K562 (cell line): ENCODE measurements at regions of chr20 and their contacts with region 1.

Region 1: GRCh38 chr20:49219089-49219923 is at the start of gene DDX27:
- DNase-seq: peak; percentile 94 to 99 (median 96)
- ATAC-seq: peak; percentile 93
- H3K4me3 ChIP-seq: peak within 1 kb of the TSS; percentile 77
- H3K27ac ChIP-seq: peak within 1 kb of the TSS; percentile 76
- H3K4me1 ChIP-seq: peaks cover 14 to 19% of the 10 kb centered on the region in 2 experiments; a peak in 4 of 5 replicates
- H3K27me3 ChIP-seq: no peaks in the 10 kb centered on the region
- CTCF ChIP-seq: peak in 1 of 3 experiments; percentile 9; a peak in 1 of 6 replicates
- EP300 ChIP-seq: no peak
- POLR2A ChIP-seq: peak; percentile 93
- RAD21 ChIP-seq: no peak
- polyA plus RNA-seq, gene DDX27: 17.9 to 45.2 TPM

Region 2: DNA sequence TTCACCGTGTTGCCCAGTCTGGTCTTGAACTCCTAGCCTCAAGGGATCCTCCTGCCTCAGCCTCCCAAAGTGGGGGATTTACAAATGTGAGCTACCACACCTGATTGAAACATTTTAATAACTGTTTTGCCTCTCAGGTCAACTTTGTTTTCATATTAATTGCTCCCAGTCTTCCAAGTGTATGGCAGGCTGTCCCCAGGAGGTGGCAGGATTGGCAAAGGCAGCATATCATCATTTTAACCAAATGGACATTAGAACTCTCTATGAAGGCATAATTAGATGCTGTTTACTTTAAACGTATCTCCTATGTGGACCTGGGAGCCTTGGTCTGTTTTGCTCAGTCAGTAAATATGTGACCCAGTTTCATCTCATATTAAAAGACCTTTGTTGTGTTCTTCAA is 232.4 kb before region 1 on chr20:
- CTCF ChIA-PET with region 1: no interaction called
- POLR2A ChIA-PET with region 1: no interaction called
- in situ Hi-C with region 1: no loop called
- intact Hi-C with region 1: loop called (anchors 2 kb)
- DNase-seq: peak in 2 of 4 experiments; percentile 17
- ATAC-seq: peak; percentile 60; the same call in 2 of the 3 replicates
- H3K4me3 ChIP-seq: no peak overlapping the region
- H3K27ac ChIP-seq: no peak overlapping the region
- H3K4me1 ChIP-seq: no peaks in the 10 kb centered on the region; a peak in 1 of 5 replicates
- H3K27me3 ChIP-seq: no peaks in the 10 kb centered on the region
- CTCF ChIP-seq: peak; percentile 25 to 50 (median 47); a peak in 5 of 6 replicates
- EP300 ChIP-seq: no peak
- POLR2A ChIP-seq: no peak
- RAD21 ChIP-seq: peak in 1 of 2 experiments; percentile 33; a peak in 1 of 4 replicates

Region 3: GRCh38 chr20:49132995-49133478 is 86.3 kb before region 1 on chr20:
- CTCF ChIA-PET with region 1: interaction called, 15 read pairs
- POLR2A ChIA-PET with region 1: interaction called, 4 read pairs
- in situ Hi-C with region 1: loop called (anchors 5 kb)
- intact Hi-C with region 1: loop called (anchors 1 kb)
- DNase-seq: peak; percentile 30 to 66 (median 38)
- ATAC-seq: peak; percentile 82
- H3K4me3 ChIP-seq: no peak overlapping the region
- H3K27ac ChIP-seq: no peak overlapping the region
- H3K4me1 ChIP-seq: peaks cover 3 to 6% of the 10 kb centered on the region in 2 experiments; a peak in 2 of 5 replicates
- H3K27me3 ChIP-seq: no peaks in the 10 kb centered on the region
- CTCF ChIP-seq: peak; percentile 52 to 70 (median 52); a peak in 5 of 6 replicates
- EP300 ChIP-seq: no peak
- POLR2A ChIP-seq: no peak
- RAD21 ChIP-seq: peak; percentile 52 to 76

Region 4: DNA sequence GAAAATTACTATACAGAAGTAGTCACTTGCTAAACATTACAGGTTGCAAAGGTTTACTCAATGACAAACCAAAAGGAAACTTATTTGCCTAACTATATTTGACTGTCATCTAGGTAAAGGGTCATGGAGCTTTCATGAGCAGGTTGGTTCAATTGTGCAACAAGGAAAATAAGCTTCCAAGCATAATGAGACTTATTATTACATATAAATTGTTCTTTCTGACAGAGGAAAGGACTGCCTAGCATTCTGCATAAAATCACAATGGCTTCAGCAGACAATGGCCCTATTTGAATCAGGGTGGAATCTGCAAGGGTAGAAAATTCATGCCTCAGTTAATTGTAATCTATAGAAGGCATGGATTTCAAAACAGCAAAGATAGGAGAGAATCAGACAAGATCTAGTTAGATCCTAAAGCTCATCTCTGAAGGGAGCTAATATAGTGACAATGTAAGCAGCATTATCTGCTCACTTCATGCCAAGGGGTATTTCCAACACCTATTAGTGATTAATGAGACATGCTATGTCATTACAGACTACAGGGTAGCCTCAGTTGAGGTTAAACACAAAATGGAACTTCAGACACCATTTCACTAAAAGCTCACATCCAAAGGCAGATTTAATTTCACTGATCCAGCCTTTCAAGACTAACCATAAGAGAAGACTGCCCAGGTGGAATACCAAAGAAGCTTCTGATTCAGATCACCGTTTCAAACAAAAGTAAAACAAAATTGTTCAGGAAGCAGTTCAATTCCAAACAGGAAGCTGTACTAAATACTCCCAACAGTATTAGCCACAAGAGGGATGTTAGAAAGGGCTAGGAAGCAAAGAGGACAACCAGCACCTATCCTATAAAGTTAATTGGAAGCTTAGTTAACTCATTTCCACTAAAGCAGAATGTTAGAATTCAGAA is 39.7 kb before region 1 on chr20:
- CTCF ChIA-PET with region 1: no interaction called
- POLR2A ChIA-PET with region 1: no interaction called
- in situ Hi-C with region 1: no loop called
- intact Hi-C with region 1: loop called (anchors 5 kb)
- DNase-seq: no peak
- ATAC-seq: no peak
- H3K4me3 ChIP-seq: no peak overlapping the region
- H3K27ac ChIP-seq: no peak overlapping the region; the same call in 2 of the 3 replicates
- H3K4me1 ChIP-seq: peaks cover 12 to 25% of the 10 kb centered on the region in 2 experiments; a peak in 3 of 5 replicates
- H3K27me3 ChIP-seq: no peaks in the 10 kb centered on the region
- CTCF ChIP-seq: no peak
- EP300 ChIP-seq: no peak
- POLR2A ChIP-seq: no peak
- RAD21 ChIP-seq: no peak

Region 5: DNA sequence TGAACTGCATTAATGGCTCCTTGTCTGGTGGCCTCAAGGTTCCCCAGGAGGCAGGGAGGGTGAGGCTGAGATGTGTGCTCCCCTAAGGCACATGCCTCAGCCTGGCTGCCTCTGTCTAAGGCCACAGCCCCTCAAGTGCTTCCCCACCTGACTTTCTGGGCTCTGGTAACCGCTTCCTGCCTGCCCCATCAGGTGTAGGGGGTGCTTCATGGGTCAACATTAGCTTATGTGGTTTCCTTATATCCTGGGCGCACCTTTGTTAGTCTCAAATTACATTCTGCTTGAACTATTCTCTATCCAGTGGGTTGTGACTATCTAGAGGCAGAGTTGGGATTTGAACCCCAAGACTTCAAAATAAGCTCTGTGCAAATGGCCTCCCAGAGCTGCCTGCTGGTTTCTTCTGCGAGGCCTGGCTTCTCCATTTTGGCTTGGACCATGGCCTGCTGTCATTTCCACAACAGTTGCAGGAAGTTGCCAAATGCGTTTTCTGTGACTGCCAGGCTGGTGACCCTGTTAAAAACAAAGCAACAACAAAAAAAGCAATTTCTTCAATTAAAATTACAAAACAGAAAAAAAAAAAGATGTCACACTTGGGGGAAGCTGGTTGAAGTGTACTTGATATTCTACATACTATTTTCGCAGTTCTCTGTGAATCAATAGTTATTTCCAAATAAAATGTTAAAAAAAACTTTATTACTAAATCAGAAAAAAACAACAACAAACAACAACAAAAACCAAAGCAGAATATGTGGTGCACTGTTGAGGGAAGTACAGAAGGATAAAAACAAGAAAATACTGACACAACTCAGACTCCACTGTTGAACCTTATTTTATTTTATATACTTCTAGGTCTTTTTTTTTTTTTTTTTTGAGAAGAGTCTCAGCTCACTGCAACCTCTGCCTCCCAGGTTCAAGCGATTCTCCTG is 78.6 kb after region 1 on chr20:
- CTCF ChIA-PET with region 1: no interaction called
- POLR2A ChIA-PET with region 1: no interaction called
- in situ Hi-C with region 1: no loop called
- intact Hi-C with region 1: no loop called
- DNase-seq: no peak
- ATAC-seq: peak; percentile 32; the same call in 1 of the 3 replicates
- H3K4me3 ChIP-seq: no peak overlapping the region
- H3K27ac ChIP-seq: no peak overlapping the region
- H3K4me1 ChIP-seq: no peaks in the 10 kb centered on the region
- H3K27me3 ChIP-seq: no peaks in the 10 kb centered on the region
- CTCF ChIP-seq: no peak
- EP300 ChIP-seq: no peak
- POLR2A ChIP-seq: no peak
- RAD21 ChIP-seq: no peak